Sciatic nerve (tissue), 2 donors: ENCODE measurements at regions of chr12 and their contacts with region 1.

Region 1: DNA sequence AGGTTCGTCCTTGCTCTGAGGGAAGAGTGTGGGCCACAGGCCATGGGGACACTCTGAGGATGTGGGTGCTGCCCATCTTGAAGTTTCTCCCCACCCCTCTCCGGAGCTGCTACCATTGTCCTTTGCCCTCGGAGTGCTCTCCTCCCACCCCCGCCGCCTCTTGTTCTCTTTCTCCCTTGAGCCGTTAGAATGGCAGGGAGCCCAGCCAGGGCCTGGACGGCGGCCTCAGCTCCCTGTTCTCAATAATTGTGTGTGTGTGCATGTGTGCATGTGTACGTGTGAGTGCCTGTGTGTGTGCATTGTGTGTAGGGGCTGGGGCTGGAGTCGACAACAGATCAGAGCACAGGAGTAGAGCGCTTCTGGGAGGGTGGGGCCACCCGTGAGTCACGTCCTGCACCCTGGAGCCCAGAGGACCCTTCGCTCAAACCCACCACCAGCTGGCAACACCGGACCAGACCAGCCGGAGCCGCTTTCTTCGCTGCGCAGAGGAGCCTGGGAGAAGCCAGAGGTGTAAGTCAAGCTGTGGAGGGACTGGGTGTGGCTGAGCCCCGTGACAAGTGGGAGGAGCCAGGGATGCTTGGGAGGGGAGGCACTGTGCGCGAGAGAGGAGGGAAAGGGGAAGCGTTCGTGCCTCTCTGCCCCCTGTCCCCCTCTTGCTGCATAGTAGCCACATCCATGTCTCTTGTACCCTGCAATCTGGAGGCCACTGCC is 25.9 kb upstream of the KCNA5 start:
- DNase-seq: no peak
- ATAC-seq: peak; percentile 9

Region 2: GRCh38 chr12:6113691-6114475 is 1096.1 kb after region 1 on chr12:
- intact Hi-C with region 1: loop called (anchors 5 kb)
- DNase-seq: peak; percentile 26
- ATAC-seq: no peak